Mammary epithelial cell (primary cell): ENCODE measurements at regions of chr2 and their contacts with region 1.

Region 1: GRCh38 chr2:226760412-226761194 is 39.0 kb downstream of the IRS1 start:
- DNase-seq: peak; percentile 57
- H3K4me3 ChIP-seq: no peak overlapping the region
- H3K27ac ChIP-seq: no peak overlapping the region
- H3K4me1 ChIP-seq: peaks cover 51% of the 10 kb centered on the region
- H3K27me3 ChIP-seq: no peaks in the 10 kb centered on the region
- CTCF ChIP-seq: no peak

Region 2: DNA sequence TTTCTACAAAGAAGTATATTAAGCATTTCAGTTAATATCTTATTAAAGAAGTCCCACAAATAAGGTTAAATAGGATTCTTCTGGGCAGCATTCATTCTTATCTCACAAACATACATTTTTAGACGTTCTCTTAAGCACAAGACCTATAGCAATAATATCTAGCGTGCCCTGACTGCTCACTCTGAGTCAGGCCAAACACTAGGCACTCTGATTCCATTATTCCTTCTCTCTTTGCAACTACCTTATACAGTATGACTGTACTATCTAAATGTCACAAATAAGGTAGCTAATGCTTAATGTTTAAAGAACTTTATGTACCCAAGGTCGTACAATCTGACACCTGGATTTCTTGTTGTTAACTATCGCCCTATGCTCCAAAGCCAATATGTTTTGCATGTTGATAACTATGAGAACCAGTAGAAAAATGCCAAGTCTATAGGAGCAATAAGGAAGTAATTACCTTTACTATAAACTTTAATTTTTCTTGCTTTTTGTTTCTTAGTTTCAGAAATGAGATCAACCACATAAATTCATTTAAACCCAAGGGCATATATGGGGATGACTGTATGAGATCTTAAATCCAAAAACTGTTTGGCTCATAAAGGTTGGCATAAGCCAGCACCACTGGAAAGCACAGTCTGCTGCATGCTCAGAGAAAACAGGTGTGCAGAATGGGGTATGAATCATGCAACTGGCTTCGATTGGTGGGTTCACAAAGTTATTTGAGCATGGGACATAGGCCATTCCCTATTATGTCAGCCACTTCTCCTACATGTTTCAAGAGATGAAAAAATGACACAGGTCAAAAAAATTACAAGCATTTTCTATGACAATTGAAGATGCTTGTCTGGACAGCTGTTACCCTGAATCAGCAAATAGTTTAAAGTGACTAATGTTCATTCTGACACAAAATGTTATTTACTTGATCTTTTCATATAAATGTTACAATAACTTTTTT is 313.0 kb before region 1 on chr2:
- CTCF ChIA-PET with region 1: no interaction called
- dilution Hi-C with region 1: no loop called
- in situ Hi-C with region 1: no loop called
- intact Hi-C with region 1: loop called (anchors 5 kb)
- DNase-seq: peak; percentile 93
- H3K4me3 ChIP-seq: no peak overlapping the region
- H3K27ac ChIP-seq: peak overlapping the region; percentile 75
- H3K4me1 ChIP-seq: peaks cover 17% of the 10 kb centered on the region
- H3K27me3 ChIP-seq: no peaks in the 10 kb centered on the region
- CTCF ChIP-seq: no peak